ENCODE measurements at regions of chr17 and their contacts with region 1.

Region 1: DNA sequence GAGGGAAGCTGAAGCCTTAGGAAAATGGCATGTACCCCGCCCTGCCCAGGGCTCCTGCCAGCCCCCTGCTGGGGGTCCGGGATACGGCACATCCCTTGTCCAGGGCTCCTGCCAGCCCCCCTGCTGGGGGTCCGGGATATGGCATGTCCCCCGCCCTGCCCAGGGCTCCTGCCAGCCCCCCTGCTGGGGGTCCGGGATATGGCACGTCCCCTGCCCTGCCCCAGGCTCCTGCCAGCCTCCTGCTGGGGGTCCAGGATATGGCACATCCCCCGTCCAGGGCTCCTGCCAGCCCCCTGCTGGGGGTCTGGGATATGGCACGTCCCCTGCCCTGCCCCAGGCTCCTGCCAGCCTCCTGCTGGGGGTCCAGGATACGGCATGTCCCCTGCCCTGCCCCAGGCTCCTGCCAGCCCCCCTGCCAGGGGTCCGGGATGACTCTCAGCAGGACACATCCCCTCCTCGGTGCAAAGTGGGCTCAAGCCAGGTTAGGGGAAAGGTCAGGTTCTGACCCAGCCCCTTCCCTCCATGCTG is 43.2 kb downstream of the RPH3AL start:
- DNase-seq: peak; percentile 48
- H3K4me3 ChIP-seq: no peak overlapping the region
- H3K27ac ChIP-seq: no peak overlapping the region
- H3K4me1 ChIP-seq: no peaks in the 10 kb centered on the region
- H3K27me3 ChIP-seq: no peaks in the 10 kb centered on the region
- CTCF ChIP-seq: peak; percentile 95 to 97
- POLR2A ChIP-seq: no peak

Region 2: GRCh38 chr17:143782-144281 is 165.6 kb before region 1 on chr17:
- CTCF ChIA-PET with region 1: interaction called, 3 read pairs
- POLR2A ChIA-PET with region 1: no interaction called
- dilution Hi-C with region 1: no loop called
- intact Hi-C with region 1: loop called (anchors 2 kb)
- DNase-seq: peak; percentile 73
- H3K4me3 ChIP-seq: no peak overlapping the region
- H3K27ac ChIP-seq: no peak overlapping the region
- H3K4me1 ChIP-seq: no peaks in the 10 kb centered on the region
- H3K27me3 ChIP-seq: no peaks in the 10 kb centered on the region
- CTCF ChIP-seq: peak; percentile 73 to 87
- POLR2A ChIP-seq: no peak

Region 3: GRCh38 chr17:164303-165235 is 144.9 kb before region 1 on chr17:
- CTCF ChIA-PET with region 1: interaction called, 22 read pairs
- POLR2A ChIA-PET with region 1: no interaction called
- dilution Hi-C with region 1: no loop called
- intact Hi-C with region 1: loop called (anchors 2 kb)
- DNase-seq: peak; percentile 69
- H3K4me3 ChIP-seq: no peak overlapping the region
- H3K27ac ChIP-seq: no peak overlapping the region
- H3K4me1 ChIP-seq: no peaks in the 10 kb centered on the region
- H3K27me3 ChIP-seq: no peaks in the 10 kb centered on the region
- CTCF ChIP-seq: peak; percentile 65 to 83
- POLR2A ChIP-seq: no peak

Region 4: DNA sequence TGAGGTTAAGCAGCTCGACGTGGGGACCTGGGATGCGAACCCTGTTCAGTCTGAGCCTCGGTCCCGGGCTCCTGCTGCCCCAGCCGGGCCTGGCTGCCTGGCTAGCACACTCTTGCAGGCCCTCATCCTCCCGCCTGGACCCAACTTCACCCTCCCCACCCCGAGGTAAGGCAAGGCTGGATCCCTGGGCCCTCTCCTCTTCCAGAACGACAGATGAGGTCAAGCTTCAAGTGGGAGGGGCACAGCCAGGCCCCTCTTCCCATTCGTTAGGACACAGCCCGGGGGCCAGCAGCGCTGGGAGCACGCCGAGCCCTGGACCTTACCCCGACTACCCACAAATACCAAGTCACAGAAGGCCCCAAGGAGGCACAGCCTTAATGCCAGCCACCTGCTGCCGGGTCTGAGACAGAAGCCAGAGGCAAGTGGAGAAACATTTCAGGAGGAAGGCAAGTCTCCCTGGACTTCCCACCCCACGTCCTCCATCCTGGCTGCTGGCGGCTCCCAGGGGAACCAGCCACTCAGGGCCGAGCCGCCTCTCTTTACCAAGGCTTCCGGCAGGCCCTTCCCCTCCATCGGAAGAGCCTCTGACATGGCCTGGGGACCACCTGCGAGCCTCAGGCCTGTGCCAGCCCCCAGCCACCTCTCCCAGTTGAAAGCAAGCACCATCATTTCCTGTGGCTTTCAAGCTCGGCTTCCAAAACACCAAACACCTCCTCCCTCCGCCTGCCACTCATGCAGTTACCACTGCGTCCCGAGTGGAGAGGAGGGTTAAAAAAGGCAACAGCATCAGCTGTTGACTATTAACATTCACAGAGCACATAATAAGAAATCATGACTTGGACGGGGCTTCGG is 16.7 kb before region 1 on chr17:
- CTCF ChIA-PET with region 1: no interaction called
- POLR2A ChIA-PET with region 1: no interaction called
- dilution Hi-C with region 1: no loop called
- intact Hi-C with region 1: no loop called
- DNase-seq: no peak
- H3K4me3 ChIP-seq: no peak overlapping the region
- H3K27ac ChIP-seq: no peak overlapping the region
- H3K4me1 ChIP-seq: no peaks in the 10 kb centered on the region
- H3K27me3 ChIP-seq: no peaks in the 10 kb centered on the region
- CTCF ChIP-seq: no peak
- POLR2A ChIP-seq: no peak